ENCODE measurements at regions of chr21 and their contacts with region 1.

Region 1: GRCh38 chr21:44297525-44298290 is 2.1 kb upstream of the PFKL start:
- DNase-seq: peak; percentile 94
- H3K4me3 ChIP-seq: peak overlapping the region in 1 of 2 experiments; percentile 26; a peak in 1 of 4 replicates
- H3K27ac ChIP-seq: no peak overlapping the region
- H3K4me1 ChIP-seq: peaks cover 3 to 16% of the 10 kb centered on the region in 2 experiments; a peak in 1 of 4 replicates
- H3K27me3 ChIP-seq: no peaks in the 10 kb centered on the region
- CTCF ChIP-seq: peak; percentile 86
- EP300 ChIP-seq: no peak
- RAD21 ChIP-seq: peak; percentile 93

Region 2: DNA sequence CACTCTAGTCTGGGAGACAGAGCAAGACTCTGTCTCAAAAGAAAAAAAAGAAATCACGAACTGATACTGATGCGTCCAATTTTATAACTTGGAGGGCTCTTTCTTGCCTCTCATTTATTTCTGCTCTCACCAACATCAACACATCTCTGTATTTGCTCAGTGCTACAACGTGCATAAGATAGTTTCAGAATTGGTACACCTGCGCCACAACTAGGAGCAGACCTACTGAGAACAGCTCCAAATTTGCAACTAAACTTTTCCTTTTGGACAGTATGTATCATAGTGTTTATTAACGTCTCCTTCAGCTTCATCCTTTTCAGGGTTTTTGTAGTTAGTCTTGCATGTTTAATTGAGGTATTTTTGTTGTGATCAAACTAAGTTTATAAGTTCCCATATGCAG is 257.9 kb before region 1 on chr21:
- CTCF ChIA-PET with region 1: no interaction called
- POLR2A ChIA-PET with region 1: no interaction called
- DNase-seq: no peak
- H3K4me3 ChIP-seq: no peak overlapping the region
- H3K27ac ChIP-seq: no peak overlapping the region
- H3K4me1 ChIP-seq: no peaks in the 10 kb centered on the region
- H3K27me3 ChIP-seq: no peaks in the 10 kb centered on the region
- CTCF ChIP-seq: no peak
- EP300 ChIP-seq: no peak
- RAD21 ChIP-seq: no peak

Region 3: GRCh38 chr21:44272284-44272858 is 25.3 kb before region 1 on chr21:
- CTCF ChIA-PET with region 1: interaction called, 14 read pairs
- POLR2A ChIA-PET with region 1: no interaction called
- DNase-seq: no peak
- H3K4me3 ChIP-seq: no peak overlapping the region
- H3K27ac ChIP-seq: no peak overlapping the region
- H3K4me1 ChIP-seq: no peaks in the 10 kb centered on the region
- H3K27me3 ChIP-seq: 0 out of 2 replicates have a peak, but pooled peaks cover 5% of the 10 kb centered on the region
- CTCF ChIP-seq: no peak
- EP300 ChIP-seq: no peak
- RAD21 ChIP-seq: no peak

Region 4: DNA sequence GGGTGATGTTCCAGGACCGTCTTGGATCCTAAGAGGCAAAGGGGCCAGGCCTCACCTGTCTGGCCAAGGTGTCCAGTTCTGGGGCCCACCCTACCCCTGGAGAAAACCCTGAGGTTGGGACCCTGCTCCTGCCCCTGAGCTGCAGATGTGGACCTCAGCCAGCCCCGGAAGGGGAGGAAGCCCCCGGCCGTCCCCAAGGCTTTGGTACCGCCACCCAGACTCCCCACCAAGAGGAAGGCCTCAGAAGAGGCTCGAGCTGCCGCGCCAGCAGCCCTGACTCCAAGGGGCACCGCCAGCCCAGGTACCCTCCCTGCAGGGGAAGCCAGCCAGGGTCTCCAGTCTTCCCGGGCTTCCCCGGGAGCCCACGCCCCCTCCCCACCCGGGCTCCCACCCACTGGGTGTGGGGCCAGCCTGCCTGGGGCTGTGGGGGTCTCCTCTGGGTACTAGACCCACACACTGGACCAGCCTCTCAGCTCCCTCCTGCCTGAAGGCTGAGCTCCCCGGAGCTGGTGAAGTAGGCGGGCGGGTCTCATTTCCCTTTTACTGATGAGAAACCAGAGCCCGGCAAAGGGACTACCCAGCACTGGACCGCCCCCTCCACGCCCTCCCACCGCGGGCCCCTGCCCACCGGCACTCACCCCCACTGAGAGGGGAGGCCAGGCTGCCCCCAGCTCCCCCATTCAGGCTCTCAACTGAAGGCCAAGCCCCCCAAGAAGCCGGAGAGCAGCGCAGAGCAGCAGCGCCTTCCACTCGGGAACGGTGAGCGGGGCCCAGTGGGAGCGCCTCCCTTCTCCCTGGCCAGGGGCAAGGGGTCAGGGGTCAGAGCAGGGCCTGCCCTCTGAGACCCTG is 10.7 kb before region 1 on chr21:
- CTCF ChIA-PET with region 1: interaction called, 21 read pairs
- POLR2A ChIA-PET with region 1: no interaction called
- DNase-seq: no peak
- H3K4me3 ChIP-seq: no peak overlapping the region
- H3K27ac ChIP-seq: no peak overlapping the region
- H3K4me1 ChIP-seq: no peaks in the 10 kb centered on the region
- H3K27me3 ChIP-seq: no peaks in the 10 kb centered on the region; the same call in 1 of the 2 replicates
- CTCF ChIP-seq: no peak
- EP300 ChIP-seq: no peak
- RAD21 ChIP-seq: no peak

Region 5: GRCh38 chr21:44310628-44311511 is 13.2 kb after region 1 on chr21:
- CTCF ChIA-PET with region 1: interaction called, 16 read pairs
- POLR2A ChIA-PET with region 1: no interaction called
- DNase-seq: no peak
- H3K4me3 ChIP-seq: no peak overlapping the region
- H3K27ac ChIP-seq: no peak overlapping the region
- H3K4me1 ChIP-seq: no peaks in the 10 kb centered on the region
- H3K27me3 ChIP-seq: no peaks in the 10 kb centered on the region
- CTCF ChIP-seq: no peak
- EP300 ChIP-seq: no peak
- RAD21 ChIP-seq: no peak

Region 6: GRCh38 chr21:44522456-44523204 is 224.9 kb after region 1 on chr21:
- CTCF ChIA-PET with region 1: no interaction called
- POLR2A ChIA-PET with region 1: no interaction called
- DNase-seq: peak; percentile 28
- H3K4me3 ChIP-seq: no peak overlapping the region
- H3K27ac ChIP-seq: no peak overlapping the region
- H3K4me1 ChIP-seq: peaks cover 0 to 8% of the 10 kb centered on the region in 2 experiments; a peak in 1 of 4 replicates
- H3K27me3 ChIP-seq: no peaks in the 10 kb centered on the region
- CTCF ChIP-seq: no peak
- EP300 ChIP-seq: no peak
- RAD21 ChIP-seq: no peak

Measured in SK-N-SH (cell line).